Activated CD8-positive, alpha-beta T cell treated with anti-CD3 and anti-CD28 coated beads, Interleukin-2, amount 10 ng/mL, durations not matched to agents 7 days and 5 days (primary cell): ENCODE measurements at regions of chr5 and their contacts with region 1.

Region 1: GRCh38 chr5:132419502-132420468 is 50.3 kb downstream of the SLC22A5 start:
- DNase-seq: peak; percentile 76
- ATAC-seq: peak; percentile 64
- H3K4me3 Mint-ChIP-seq: peak overlapping the region; percentile 69
- H3K27ac Mint-ChIP-seq: peak overlapping the region; percentile 91
- H3K4me1 Mint-ChIP-seq: peaks cover 95% of the 10 kb centered on the region
- H3K27me3 Mint-ChIP-seq: no peaks in the 10 kb centered on the region

Region 2: DNA sequence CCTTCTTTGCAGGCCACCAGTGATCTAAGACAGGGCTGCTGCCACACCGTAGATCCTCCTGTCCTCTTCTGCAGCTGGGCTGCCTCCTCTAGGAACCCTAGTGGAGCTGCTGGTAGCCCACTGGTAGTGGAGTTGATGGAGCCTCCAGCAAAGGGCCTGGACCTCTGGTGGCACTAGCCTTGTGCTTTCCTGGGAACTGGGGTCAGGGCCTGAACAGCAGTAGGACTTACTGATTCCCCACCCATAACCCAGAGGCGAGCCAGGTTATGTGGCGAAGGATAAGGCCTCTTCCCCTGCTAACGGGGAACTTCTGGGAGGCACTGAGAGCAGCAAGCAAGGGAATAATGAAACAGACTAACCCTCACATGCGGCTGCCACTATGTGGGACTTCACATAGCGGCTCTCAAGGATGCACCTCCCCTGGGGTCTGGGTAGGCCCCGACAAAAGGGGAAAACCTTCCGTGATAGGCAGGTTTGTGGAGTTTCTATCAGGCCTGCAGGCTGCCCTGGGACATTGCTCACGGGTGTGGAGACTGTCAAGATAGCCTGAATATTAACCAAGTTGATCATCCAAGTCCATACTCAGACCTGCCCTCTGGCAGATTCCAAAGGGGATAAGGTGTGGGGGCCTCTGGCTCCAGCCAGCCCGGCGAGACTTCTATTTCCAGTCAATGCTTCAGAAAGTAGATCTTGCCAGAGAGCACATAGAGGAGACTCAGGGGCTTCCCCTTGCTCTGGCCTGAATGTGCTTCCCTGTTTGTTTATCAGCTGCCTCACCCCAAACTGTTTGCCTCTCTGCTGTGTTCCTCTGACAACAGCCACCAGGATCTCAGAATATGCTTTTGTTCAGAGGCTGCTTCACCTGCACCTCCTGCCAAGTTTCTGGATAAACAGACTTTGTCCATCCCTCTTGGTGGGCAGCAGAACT is 118.2 kb before region 1 on chr5:
- CTCF ChIA-PET with region 1: no interaction called
- POLR2A ChIA-PET with region 1: no interaction called
- DNase-seq: no peak
- ATAC-seq: no peak
- H3K4me3 Mint-ChIP-seq: no peak overlapping the region
- H3K27ac Mint-ChIP-seq: no peak overlapping the region
- H3K4me1 Mint-ChIP-seq: no peaks in the 10 kb centered on the region
- H3K27me3 Mint-ChIP-seq: peaks cover 4% of the 10 kb centered on the region

Region 3: GRCh38 chr5:132473019-132473531 is 53.3 kb after region 1 on chr5:
- CTCF ChIA-PET with region 1: interaction called, 14 read pairs
- POLR2A ChIA-PET with region 1: interaction called, 435 read pairs
- DNase-seq: peak; percentile 95
- ATAC-seq: peak; percentile 63
- H3K4me3 Mint-ChIP-seq: peak overlapping the region; percentile 42
- H3K27ac Mint-ChIP-seq: peak overlapping the region; percentile 94
- H3K4me1 Mint-ChIP-seq: peaks cover 92% of the 10 kb centered on the region
- H3K27me3 Mint-ChIP-seq: no peaks in the 10 kb centered on the region

Region 4: GRCh38 chr5:132479111-132479951 is 59.5 kb after region 1 on chr5:
- CTCF ChIA-PET with region 1: interaction called, 23 read pairs
- POLR2A ChIA-PET with region 1: interaction called, 435 read pairs
- DNase-seq: no peak
- ATAC-seq: no peak
- H3K4me3 Mint-ChIP-seq: no peak overlapping the region
- H3K27ac Mint-ChIP-seq: peak overlapping the region; percentile 80
- H3K4me1 Mint-ChIP-seq: peaks cover 83% of the 10 kb centered on the region
- H3K27me3 Mint-ChIP-seq: no peaks in the 10 kb centered on the region

Region 5: DNA sequence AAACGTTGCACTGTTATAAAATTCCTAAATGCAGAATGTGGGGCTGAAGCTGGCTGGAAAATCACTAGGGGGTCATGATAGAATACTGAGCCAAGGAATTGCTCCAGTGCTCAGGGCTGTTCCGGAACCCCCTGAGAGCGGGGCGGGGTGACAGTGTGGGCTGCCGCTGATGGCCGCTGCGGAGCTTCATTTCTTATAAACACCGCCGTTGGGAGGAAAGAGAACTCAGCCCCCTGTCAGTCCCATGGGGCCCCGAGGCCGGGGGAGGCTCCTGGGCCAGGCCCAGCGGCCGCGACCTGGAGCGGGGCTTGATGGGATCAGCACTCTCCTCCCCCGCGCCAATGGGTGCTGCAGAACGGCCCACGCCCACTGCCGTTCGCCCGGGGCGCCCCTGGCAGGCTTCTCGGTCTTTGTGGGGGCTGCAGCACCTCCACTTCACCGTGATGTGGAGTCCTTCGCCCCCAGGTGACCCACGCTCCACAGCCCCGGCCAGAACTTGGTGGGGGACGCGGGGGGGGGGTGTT is 75.9 kb after region 1 on chr5:
- CTCF ChIA-PET with region 1: interaction called, 52 read pairs
- POLR2A ChIA-PET with region 1: interaction called, 435 read pairs
- DNase-seq: peak; percentile 87
- ATAC-seq: peak; percentile 59
- H3K4me3 Mint-ChIP-seq: peak overlapping the region; percentile 83
- H3K27ac Mint-ChIP-seq: peak overlapping the region; percentile 95
- H3K4me1 Mint-ChIP-seq: peaks cover 77% of the 10 kb centered on the region
- H3K27me3 Mint-ChIP-seq: no peaks in the 10 kb centered on the region

Region 6: DNA sequence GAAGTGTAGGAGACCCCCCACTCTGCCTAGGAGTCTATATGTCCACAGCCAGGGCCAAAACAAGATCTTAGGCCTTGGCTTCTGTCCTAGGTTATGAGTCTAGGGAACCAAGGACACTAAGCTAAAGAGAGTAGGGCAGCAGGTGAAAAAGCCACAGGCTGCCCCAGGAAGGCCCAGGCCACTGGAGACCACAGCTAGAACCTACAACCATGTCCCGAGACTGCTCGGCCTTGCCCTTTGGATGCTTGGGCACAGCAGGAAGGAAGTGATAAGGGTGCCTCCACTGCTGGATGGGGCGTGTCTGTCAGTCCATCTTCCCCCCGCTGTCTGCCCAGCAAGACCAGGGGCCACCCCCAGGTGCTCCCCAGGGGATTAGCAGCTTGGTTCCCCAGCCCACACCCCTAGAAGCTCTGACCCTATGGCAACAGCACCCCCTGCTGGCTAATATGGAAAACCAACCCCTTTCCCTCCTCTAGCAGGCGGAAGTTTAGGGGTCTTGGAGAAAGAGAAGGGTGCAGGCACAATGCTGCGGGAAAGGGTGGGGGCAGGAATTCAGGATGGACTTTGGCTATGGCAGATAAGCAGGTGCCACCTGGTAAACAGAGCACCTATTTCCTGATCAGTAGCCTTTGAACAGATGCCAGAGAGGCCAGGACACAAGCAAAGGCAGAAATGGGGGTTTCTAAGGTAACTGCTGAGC is 81.3 kb after region 1 on chr5:
- CTCF ChIA-PET with region 1: interaction called, 29 read pairs
- POLR2A ChIA-PET with region 1: interaction called, 81 read pairs
- DNase-seq: peak; percentile 85
- ATAC-seq: peak; percentile 25
- H3K4me3 Mint-ChIP-seq: no peak overlapping the region
- H3K27ac Mint-ChIP-seq: peak overlapping the region; percentile 81
- H3K4me1 Mint-ChIP-seq: peaks cover 45% of the 10 kb centered on the region
- H3K27me3 Mint-ChIP-seq: peaks cover 5% of the 10 kb centered on the region